MCF 10A (cell line): ENCODE measurements at regions of chr17 and their contacts with region 1.

Region 1: GRCh38 chr17:7931709-7932482 is at the starts of genes CNTROB and TRAPPC1:
- DNase-seq: peak; percentile 98
- H3K4me3 Mint-ChIP-seq: peak within 1 kb of the TSS; percentile 95
- H3K27ac Mint-ChIP-seq: peak within 1 kb of the TSS; percentile 96
- H3K4me1 Mint-ChIP-seq: peaks cover 22% of the 10 kb centered on the region
- H3K27me3 Mint-ChIP-seq: no peaks in the 10 kb centered on the region
- CTCF ChIP-seq: no peak
- total RNA-seq, gene CNTROB: 31.5 and 39.2 TPM in 2 replicates
- total RNA-seq, gene TRAPPC1: 80.0 and 104 TPM in 2 replicates

Region 2: DNA sequence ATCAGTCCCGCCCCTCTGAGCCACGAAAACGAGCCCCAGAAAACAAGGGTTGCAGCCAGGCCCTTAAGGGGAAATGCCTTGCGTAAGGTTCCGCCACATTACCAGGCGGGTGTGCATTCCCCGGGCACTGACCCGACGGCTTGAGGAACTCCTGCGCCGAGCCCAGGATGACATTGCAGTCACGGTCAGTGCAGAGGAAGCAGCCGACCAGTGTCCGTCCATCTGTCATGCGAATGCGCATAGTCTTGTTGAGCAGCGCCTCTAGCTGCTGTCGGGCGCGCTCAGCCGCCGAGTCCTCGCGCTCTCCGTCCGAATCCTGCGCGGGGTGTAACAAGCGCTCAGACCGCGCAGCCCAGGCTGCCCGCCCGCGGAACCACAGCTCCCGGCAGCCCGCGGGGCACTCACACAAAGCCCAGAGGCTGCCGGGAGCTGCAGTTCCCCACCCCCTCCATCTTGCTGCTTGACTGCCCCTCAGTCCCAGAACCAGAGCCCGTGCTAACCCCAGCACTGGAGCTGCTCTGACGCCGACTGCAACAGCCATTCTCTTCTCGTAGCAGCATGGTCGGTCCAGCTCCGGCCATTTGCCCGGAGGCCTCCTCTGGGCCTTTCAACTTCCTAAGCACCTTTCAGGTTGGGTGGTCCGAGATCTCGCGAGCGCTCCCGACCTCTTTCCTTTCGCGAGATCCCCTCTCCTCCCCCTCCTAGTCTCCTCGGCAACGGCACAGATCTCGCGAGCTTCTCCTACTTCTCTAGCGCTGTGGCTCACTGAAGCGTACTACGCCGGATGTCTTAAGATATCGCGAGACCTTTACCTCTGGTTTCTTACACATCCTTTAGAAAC is 74.8 kb before region 1 on chr17 and contains the start of gene NAA38:
- CTCF ChIA-PET with region 1: interaction called, 4 read pairs
- POLR2A ChIA-PET with region 1: interaction called, 16 read pairs
- intact Hi-C with region 1: no loop called
- DNase-seq: peak; percentile 99
- H3K4me3 Mint-ChIP-seq: no peak within 1 kb of the TSS
- H3K27ac Mint-ChIP-seq: no peak within 1 kb of the TSS
- H3K4me1 Mint-ChIP-seq: peaks cover 7% of the 10 kb centered on the region
- H3K27me3 Mint-ChIP-seq: no peaks in the 10 kb centered on the region
- CTCF ChIP-seq: peak; percentile 22
- total RNA-seq, gene NAA38: 70.2 and 83.4 TPM in 2 replicates

Region 3: GRCh38 chr17:7915611-7916382 is 16.1 kb before region 1 on chr17 and contains the start of gene RNF227:
- CTCF ChIA-PET with region 1: interaction called, 20 read pairs
- POLR2A ChIA-PET with region 1: interaction called, 103 read pairs
- intact Hi-C with region 1: loop called (anchors 1 kb)
- DNase-seq: peak; percentile 97
- H3K4me3 Mint-ChIP-seq: peak within 1 kb of the TSS; percentile 93
- H3K27ac Mint-ChIP-seq: peak within 1 kb of the TSS; percentile 95
- H3K4me1 Mint-ChIP-seq: peaks cover 26% of the 10 kb centered on the region
- H3K27me3 Mint-ChIP-seq: no peaks in the 10 kb centered on the region
- CTCF ChIP-seq: no peak
- total RNA-seq, gene RNF227: 5.6 and 7.4 TPM in 2 replicates

Region 4: DNA sequence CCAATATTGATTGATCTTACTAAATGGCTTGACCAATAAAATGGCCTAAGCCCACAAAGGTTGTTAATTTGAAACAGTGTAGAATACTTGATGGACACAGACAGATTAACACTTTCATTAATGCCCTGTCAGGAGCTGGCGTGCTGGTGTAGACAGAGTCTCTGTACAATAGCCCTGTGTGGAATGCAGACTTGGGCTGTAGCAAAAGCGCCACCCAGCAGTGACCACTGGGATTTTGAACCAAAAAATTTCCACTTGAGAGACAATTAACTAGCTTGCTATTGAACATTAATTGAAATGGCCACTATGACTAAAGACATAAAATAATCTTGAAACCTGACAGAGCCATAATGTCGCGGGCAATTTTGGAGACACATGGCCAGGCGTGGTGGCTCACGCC is 50.8 kb after region 1 on chr17:
- CTCF ChIA-PET with region 1: interaction called, 19 read pairs
- POLR2A ChIA-PET with region 1: interaction called, 12 read pairs
- intact Hi-C with region 1: loop called (anchors 5 kb)
- DNase-seq: peak; percentile 21
- H3K4me3 Mint-ChIP-seq: no peak overlapping the region
- H3K27ac Mint-ChIP-seq: no peak overlapping the region
- H3K4me1 Mint-ChIP-seq: peaks cover 15% of the 10 kb centered on the region
- H3K27me3 Mint-ChIP-seq: no peaks in the 10 kb centered on the region
- CTCF ChIP-seq: no peak

Region 5: GRCh38 chr17:8041249-8041928 is 109.5 kb after region 1 on chr17:
- CTCF ChIA-PET with region 1: interaction called, 8 read pairs
- POLR2A ChIA-PET with region 1: interaction called, 11 read pairs
- intact Hi-C with region 1: loop called (anchors 5 kb)
- DNase-seq: peak; percentile 91
- H3K4me3 Mint-ChIP-seq: peak overlapping the region; percentile 82
- H3K27ac Mint-ChIP-seq: peak overlapping the region; percentile 95
- H3K4me1 Mint-ChIP-seq: peaks cover 23% of the 10 kb centered on the region
- H3K27me3 Mint-ChIP-seq: no peaks in the 10 kb centered on the region
- CTCF ChIP-seq: peak; percentile 87